ENCODE measurements at regions of chr6 and their contacts with region 1.

Region 1: GRCh38 chr6:150710211-150710610 is 110.5 kb downstream of the PLEKHG1 start:
- DNase-seq: no peak
- ATAC-seq: no peak
- H3K4me3 ChIP-seq: no peak overlapping the region
- H3K27ac ChIP-seq: no peak overlapping the region
- H3K4me1 ChIP-seq: no peaks in the 10 kb centered on the region
- H3K27me3 ChIP-seq: peaks cover 0 to 4% of the 10 kb centered on the region in 2 experiments; a peak in 2 of 5 replicates
- CTCF ChIP-seq: no peak
- EP300 ChIP-seq: no peak
- POLR2A ChIP-seq: no peak
- RAD21 ChIP-seq: no peak

Region 2: DNA sequence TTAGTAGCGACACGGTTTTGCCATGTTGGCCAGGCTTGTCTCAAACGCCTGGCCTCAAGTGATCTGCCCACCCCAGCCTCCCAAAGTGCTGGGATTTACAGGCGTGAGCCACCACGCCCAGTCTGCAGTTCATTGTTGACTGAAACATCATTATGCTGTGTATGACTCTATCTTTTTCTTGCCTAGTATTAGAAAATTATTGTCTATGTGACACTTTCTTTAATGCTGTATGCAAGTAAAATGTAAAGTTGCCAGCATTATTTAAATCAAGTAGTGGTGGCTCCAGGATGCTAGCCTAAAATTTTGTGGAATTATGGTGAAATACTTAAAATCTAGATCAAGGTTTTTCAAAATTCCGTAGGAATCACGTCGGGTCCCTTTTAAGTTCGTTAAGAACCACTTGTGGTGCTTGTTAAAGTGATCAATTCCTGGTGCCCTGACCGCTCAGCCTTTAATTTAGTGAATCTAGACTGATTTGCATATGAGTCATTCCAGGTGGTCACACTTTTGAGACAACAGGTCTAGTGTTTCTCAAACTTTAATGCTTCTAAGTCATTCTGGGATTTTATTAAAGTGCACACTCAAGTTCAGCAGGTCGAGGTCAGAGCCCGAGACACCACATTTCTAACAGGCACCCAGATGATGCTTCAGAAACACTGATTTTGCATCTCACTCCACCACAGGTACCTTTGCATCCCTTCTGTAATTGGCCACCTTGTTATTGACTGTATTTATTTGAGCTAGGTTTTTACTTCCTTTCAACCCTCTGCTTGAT is 22.7 kb after region 1 on chr6:
- CTCF ChIA-PET with region 1: no interaction called
- POLR2A ChIA-PET with region 1: no interaction called
- in situ Hi-C with region 1: no loop called
- intact Hi-C with region 1: loop called (anchors 1 kb)
- DNase-seq: no peak
- ATAC-seq: no peak
- H3K4me3 ChIP-seq: no peak overlapping the region
- H3K27ac ChIP-seq: no peak overlapping the region
- H3K4me1 ChIP-seq: no peaks in the 10 kb centered on the region
- H3K27me3 ChIP-seq: no peaks in the 10 kb centered on the region; a peak in 1 of 5 replicates
- CTCF ChIP-seq: no peak
- EP300 ChIP-seq: no peak
- POLR2A ChIP-seq: no peak
- RAD21 ChIP-seq: no peak

Measured in HepG2 (cell line).